ENCODE measurements at regions of chr10 and their contacts with region 1.

Region 1: DNA sequence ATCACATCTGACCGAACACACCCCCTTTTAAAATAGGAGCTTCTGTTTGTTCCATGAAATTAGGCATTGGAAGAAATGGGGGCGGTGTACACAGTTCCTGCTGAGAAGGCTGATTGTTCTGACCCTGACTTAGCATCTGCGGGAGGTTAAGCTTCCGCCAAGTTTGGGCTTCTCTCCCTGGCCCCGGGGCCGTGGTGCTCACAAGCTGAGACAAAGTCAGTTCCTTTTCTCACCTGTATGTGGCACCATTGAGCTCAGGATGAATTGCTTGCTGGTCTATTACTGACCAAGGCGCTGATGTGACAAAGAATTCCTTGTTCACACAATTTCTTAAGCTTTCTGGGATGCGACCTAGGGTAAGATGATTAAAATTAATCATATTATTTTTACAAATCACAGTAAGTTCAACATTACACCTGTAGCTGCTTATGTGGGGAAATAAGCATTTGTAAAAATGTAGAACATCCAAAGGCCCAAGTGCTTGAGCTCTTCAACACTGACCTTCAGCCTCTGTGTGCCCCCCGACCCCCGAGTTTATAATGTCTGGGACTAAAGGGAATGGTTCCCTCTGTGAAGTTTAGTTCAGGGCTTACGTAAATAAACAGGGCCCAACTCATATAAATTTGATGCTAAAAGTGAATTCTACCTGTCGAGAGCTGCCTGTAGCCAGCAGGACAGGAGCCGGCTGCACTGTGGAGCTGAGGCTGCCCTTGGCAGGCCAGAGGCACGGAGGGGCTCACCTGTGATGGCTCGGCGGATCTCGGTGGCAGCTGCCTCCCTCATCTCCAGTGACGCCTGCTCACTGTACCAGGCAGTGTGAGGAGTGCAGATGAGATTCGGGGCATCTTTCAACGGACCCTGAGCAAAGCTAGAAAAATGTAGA is 50.8 kb downstream of the ZRANB1 start:
- DNase-seq: peak; percentile 46
- H3K4me3 ChIP-seq: no peak overlapping the region
- H3K27ac ChIP-seq: no peak overlapping the region
- H3K4me1 ChIP-seq: peaks cover 4% of the 10 kb centered on the region
- H3K27me3 ChIP-seq: no peaks in the 10 kb centered on the region
- CTCF ChIP-seq: peak; percentile 48 to 51

Region 2: DNA sequence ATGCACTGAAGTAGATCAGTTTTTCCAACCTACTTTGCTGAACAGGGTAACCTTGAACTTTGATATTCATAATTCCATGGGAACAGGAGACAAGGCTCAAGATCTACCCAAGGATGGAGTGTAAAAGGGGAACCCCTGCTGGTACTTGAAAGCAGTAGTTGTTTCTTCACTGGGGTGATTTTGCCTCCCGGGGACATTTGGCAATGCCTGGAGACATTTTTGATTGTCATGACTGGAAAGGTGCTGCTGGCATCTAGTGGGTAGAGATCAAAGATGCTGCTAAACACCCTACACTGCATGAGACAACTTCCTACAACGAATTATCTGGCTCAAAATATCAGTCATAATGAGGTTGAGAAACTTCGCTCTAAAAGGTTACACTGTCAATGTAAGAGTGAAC is 382.5 kb after region 1 on chr10:
- CTCF ChIA-PET with region 1: no interaction called
- dilution Hi-C with region 1: no loop called
- in situ Hi-C with region 1: no loop called
- intact Hi-C with region 1: loop called (anchors 1 kb)
- DNase-seq: peak; percentile 46
- H3K4me3 ChIP-seq: no peak overlapping the region
- H3K27ac ChIP-seq: no peak overlapping the region
- H3K4me1 ChIP-seq: no peaks in the 10 kb centered on the region
- H3K27me3 ChIP-seq: no peaks in the 10 kb centered on the region
- CTCF ChIP-seq: peak; percentile 7 to 41

Region 3: DNA sequence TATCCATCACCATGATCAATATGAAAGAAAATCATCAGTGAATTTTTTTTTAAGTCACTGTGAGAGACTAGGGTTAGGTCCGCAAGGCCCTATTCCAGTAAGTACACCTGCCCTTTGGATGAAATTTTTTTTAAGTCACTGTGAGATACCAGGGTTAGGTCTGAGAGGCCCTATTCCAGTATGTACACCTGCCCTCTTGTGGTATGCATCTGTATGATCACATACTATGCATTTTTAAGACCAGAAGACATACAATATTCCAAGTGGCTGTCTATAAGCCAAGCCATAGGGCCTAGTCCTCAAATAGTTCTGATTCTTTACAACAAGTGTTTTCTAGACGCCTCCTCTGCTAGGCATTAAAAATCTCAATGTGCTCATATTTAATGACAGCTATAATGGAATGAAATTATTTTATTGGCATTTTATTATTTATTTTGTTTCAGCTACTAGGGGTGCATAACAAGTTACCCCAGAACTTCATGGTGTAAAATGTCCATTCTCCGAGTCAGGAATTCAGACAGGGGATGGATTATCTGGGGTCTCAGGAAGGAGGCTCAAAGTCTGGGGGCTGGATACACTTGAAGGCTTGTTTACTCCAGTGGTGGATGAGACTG is 637.2 kb after region 1 on chr10:
- CTCF ChIA-PET with region 1: interaction called, 3 read pairs
- dilution Hi-C with region 1: no loop called
- in situ Hi-C with region 1: no loop called
- intact Hi-C with region 1: loop called (anchors 2 kb)
- DNase-seq: peak; percentile 46
- H3K4me3 ChIP-seq: no peak overlapping the region
- H3K27ac ChIP-seq: no peak overlapping the region
- H3K4me1 ChIP-seq: no peaks in the 10 kb centered on the region
- H3K27me3 ChIP-seq: no peaks in the 10 kb centered on the region
- CTCF ChIP-seq: peak; percentile 56 to 78